Activated CD4-positive, alpha-beta memory T cell treated with anti-CD3 and anti-CD28 coated beads for 36 hours (primary cell): ENCODE measurements at regions of chr4 and their contacts with region 1.

Region 1: DNA sequence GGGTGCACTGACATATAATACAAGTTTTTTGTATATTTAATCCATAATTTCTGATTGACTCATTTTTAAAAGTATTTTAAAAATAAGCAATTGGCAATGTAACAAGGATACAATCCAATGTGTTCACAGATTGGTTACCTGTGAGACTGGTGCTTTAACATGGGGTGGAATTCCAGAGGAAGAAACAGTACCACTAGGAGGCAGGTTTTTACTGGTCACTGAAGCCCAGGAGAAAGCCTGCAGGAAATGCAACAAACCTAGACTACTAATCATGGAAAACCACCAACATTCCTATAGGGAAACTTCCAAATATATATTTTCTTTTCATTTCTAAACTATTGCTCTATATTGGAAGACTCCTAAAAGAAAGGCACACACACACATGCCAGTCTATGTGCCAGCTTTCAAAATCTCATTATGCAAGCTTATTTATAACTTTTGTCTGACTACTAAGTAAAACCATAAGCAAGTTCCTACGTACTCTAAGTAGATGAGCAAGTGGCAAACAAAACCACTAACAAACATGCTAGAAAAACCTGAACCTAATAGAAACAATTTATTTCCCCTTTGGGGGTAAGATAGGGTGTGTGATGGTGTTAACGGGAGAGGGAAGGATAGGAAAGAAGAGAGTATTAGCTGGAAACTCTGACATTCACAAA is 19.2 kb downstream of the G3BP2 start:
- DNase-seq: no peak
- H3K4me3 Mint-ChIP-seq: no peak overlapping the region
- H3K27ac Mint-ChIP-seq: peak overlapping the region; percentile 82
- H3K4me1 Mint-ChIP-seq: peaks cover 43% of the 10 kb centered on the region
- H3K27me3 Mint-ChIP-seq: no peaks in the 10 kb centered on the region

Region 2: DNA sequence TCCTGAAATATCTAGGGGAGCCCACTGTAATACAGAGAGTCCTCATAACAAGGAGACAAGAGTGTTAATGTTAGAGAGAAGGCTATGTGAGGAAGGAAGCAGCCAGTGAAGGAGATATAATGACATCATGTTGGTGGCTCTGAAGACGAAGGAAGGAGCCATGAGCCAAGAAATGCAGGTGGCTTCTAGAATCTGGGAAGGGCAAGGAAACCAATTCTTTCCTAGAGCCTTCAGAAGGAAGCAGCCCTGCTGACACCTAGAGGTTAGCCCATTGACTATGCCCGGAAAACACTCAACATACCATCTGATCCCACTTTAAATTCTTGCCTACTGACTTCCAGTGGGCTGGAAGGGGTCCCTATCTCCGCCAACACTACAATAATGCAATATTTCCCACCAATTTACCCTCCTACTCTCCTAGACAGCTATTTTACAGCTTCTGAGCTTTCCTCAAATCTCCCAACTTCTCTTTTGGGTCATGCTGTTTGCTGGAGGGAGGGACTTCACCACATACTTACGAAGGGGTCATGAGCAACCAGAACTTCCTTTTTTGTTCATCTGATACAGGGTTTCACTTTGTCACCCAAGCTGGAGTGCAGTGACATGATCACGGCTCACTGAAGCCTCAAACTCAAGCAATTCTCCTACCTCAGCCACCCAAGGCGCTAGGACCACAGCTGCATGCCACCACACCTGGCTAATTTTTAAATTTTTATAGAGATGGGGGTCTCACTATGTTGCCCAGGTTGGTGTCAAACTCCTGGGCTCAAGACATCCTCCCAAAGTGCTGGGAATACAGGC is 44.4 kb after region 1 on chr4:
- CTCF ChIA-PET with region 1: no interaction called
- POLR2A ChIA-PET with region 1: no interaction called
- intact Hi-C with region 1: loop called (anchors 2 kb)
- DNase-seq: peak; percentile 48
- H3K4me3 Mint-ChIP-seq: no peak overlapping the region
- H3K27ac Mint-ChIP-seq: peak overlapping the region; percentile 64
- H3K4me1 Mint-ChIP-seq: peaks cover 23% of the 10 kb centered on the region
- H3K27me3 Mint-ChIP-seq: no peaks in the 10 kb centered on the region

Region 3: DNA sequence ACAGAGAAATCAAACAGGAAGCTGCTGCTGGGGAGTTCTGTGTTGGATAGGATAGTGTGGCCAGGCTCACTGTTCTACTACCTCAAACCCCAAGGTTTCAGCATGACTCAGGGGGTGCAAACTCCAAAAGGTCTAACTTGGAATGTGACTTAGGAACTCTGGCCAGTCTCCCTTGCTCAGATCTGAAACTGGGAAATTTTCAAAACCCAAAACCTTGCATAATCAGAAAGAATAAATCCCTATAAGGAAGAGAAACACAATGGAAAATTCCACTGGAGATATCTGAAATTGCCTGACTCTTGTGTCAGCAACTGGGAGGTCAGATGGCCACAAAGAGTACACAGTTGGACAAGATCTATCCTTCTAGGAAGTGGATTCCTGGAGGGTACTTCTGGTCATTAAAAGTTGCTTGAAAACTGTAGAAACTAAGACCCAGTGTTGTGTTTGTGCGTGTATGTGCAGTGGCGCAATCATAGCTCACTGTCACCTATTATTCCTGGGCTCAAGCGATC is 190.2 kb after region 1 on chr4:
- CTCF ChIA-PET with region 1: interaction called, 10 read pairs
- POLR2A ChIA-PET with region 1: no interaction called
- intact Hi-C with region 1: loop called (anchors 5 kb)
- DNase-seq: no peak
- H3K4me3 Mint-ChIP-seq: no peak overlapping the region
- H3K27ac Mint-ChIP-seq: no peak overlapping the region
- H3K4me1 Mint-ChIP-seq: peaks cover 10% of the 10 kb centered on the region
- H3K27me3 Mint-ChIP-seq: peaks cover 2% of the 10 kb centered on the region

Region 4: DNA sequence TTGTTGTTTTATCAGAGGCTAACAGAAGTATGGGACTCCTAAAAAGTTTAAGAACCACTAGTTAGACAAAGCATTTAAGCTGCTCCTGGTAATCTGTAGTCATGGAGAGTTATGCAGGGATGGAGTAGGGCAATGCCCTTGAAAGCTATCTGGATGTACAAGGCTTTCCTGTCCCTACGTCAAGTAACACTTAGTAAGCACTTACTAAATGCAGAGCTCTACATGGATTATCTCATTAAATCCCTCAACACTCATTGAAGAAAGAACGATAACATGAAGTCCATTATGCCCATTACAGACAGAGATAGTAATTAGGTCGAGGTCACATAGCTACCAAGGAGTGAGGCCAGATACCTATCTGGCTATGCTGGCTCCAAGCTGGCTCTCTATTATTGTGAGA is 215.1 kb after region 1 on chr4:
- CTCF ChIA-PET with region 1: no interaction called
- POLR2A ChIA-PET with region 1: no interaction called
- intact Hi-C with region 1: no loop called
- DNase-seq: no peak
- H3K4me3 Mint-ChIP-seq: no peak overlapping the region
- H3K27ac Mint-ChIP-seq: no peak overlapping the region
- H3K4me1 Mint-ChIP-seq: no peaks in the 10 kb centered on the region
- H3K27me3 Mint-ChIP-seq: no peaks in the 10 kb centered on the region